MCF 10A (cell line): ENCODE measurements at regions of chr16 and their contacts with region 1.

Region 1: GRCh38 chr16:67993189-67994039 is 5.9 kb downstream of the DPEP2 start:
- DNase-seq: peak; percentile 62
- H3K4me3 Mint-ChIP-seq: peak overlapping the region; percentile 53
- H3K27ac Mint-ChIP-seq: peak overlapping the region; percentile 82
- H3K4me1 Mint-ChIP-seq: no peaks in the 10 kb centered on the region
- H3K27me3 Mint-ChIP-seq: no peaks in the 10 kb centered on the region
- CTCF ChIP-seq: peak; percentile 98

Region 2: GRCh38 chr16:68005786-68006286 is 12.4 kb after region 1 on chr16:
- CTCF ChIA-PET with region 1: interaction called, 26 read pairs
- POLR2A ChIA-PET with region 1: interaction called, 6 read pairs
- intact Hi-C with region 1: no loop called
- DNase-seq: peak; percentile 30
- H3K4me3 Mint-ChIP-seq: no peak overlapping the region
- H3K27ac Mint-ChIP-seq: peak overlapping the region; percentile 59
- H3K4me1 Mint-ChIP-seq: peaks cover 10% of the 10 kb centered on the region
- H3K27me3 Mint-ChIP-seq: no peaks in the 10 kb centered on the region
- CTCF ChIP-seq: no peak

Region 3: DNA sequence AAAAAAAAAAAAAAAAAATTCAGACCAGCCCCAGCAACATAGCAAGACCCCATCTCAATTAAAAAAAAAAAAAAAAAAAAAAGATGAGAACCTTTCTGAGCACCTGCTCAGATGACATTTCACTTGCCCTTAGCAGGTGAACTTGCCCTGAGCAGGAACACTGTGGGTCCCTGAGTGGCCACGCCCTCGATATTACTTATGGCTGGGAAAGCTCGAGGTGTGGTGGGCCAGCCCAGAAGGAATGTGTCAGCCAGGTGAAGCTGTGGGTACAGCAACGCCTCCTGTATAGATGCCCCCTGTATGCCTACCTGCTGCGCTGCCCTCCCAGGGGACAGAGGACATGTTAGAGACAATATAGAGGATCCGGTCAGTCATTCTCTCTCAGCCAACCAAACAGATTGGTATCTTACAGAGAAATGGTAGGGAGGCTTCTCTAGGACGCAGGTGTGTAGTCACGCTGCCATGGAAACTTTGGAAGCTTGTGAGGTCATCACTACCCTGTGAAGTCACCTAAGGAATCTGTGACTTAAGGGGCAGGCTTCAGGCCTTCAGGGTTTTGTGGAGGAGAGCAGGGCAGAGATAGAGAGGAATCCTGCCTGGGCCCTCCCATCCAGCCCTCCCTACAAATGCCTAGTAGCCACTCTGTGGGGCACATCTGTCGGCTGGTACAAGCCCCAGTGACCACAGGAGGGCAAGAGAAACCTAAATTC is 22.1 kb after region 1 on chr16 and contains the start of gene DPEP2NB:
- CTCF ChIA-PET with region 1: interaction called, 10 read pairs
- POLR2A ChIA-PET with region 1: no interaction called
- intact Hi-C with region 1: no loop called
- DNase-seq: no peak
- H3K4me3 Mint-ChIP-seq: no peak within 1 kb of the TSS
- H3K27ac Mint-ChIP-seq: no peak within 1 kb of the TSS
- H3K4me1 Mint-ChIP-seq: no peaks in the 10 kb centered on the region
- H3K27me3 Mint-ChIP-seq: no peaks in the 10 kb centered on the region
- CTCF ChIP-seq: no peak
- total RNA-seq, gene DPEP2NB: not detected in 2 replicates